ENCODE measurements at regions of chr16 and their contacts with region 1.

Region 1: DNA sequence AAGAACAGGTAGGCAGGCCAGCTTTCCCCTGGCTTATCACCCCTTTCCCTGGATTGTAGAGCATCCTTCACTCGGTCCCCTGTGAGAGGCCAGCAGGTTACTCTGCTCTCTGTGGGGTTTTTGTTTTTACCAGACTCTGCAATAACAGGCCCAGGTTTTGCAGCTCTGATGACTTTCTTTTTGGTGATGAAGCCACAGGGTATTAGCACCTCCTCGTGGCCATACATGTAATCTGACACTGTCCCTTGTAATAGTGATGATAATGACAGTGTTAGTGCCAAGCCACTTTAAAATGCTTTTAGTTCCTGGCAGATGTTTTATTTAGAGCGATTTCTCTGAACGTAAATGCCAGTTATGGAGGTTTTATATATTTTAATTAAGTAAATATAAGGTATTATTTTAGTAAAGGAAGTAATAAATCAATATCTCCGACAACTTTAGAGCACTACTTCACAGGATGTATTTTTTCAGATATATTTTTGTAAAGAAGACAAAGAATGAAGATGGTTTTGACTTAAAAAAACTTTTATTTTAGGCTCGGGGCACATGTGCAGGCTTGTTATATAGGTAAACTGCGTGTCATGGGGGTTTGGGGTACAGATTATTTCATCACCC is 38.0 kb upstream of the CPHXL start:
- DNase-seq: peak; percentile 70
- ATAC-seq: peak; percentile 98
- H3K4me3 ChIP-seq: no peak overlapping the region
- H3K27ac ChIP-seq: no peak overlapping the region
- H3K4me1 ChIP-seq: no peaks in the 10 kb centered on the region
- H3K27me3 ChIP-seq: peaks cover 3% of the 10 kb centered on the region; the same call in 1 of the 2 replicates
- CTCF ChIP-seq: peak; percentile 84
- POLR2A ChIP-seq: 0 out of 2 replicates have a peak, but pooled peaks have one; percentile 35
- RAD21 ChIP-seq: peak; percentile 93

Region 2: DNA sequence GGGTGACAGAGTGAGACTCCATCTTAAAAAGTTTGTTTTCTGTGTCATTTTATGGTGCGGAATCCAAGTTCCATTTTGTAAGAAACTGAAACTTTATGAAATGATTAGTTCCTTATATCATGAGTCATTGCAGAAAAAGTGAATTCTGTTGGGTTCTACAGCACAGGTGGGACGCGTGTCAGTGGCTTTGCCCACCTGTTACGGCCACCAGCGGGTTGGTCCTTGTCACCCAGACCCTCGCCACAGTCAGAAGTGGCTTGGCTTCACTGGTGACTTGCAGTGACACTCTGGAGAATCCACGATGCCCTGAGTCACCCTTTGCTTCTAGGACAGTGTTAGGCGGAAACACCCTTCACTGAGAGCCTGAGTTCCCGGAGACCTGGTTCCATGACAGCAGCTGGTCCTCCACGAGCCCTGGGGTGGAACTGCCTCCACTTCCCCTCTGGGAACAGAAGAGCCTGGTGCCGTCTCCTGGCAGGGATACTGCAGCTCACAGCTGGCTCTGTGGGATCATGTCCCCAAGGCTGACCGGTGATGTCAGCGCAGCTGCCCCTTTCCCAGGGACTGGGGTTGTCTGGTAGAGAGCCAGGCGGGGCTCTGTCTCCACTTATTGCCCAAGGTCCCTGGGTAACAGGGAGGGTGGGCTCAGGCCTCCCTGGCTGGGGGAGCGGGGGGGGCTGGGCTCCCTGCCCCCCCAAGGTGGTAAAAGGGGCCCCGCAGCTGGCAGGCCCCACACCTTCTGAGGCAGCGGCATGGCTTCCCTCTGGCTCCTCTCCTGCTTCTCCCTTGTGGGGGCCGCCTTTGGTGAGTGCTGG is 545.8 kb before region 1 on chr16 and contains the start of gene CTRB1:
- CTCF ChIA-PET with region 1: no interaction called
- POLR2A ChIA-PET with region 1: no interaction called
- dilution Hi-C with region 1: no loop called
- in situ Hi-C with region 1: loop called (anchors 25 kb)
- intact Hi-C with region 1: no loop called
- DNase-seq: no peak
- ATAC-seq: no peak
- H3K4me3 ChIP-seq: no peak within 1 kb of the TSS
- H3K27ac ChIP-seq: no peak within 1 kb of the TSS
- H3K4me1 ChIP-seq: no peaks in the 10 kb centered on the region
- H3K27me3 ChIP-seq: no peaks in the 10 kb centered on the region
- CTCF ChIP-seq: no peak
- POLR2A ChIP-seq: no peak
- RAD21 ChIP-seq: no peak
- total RNA-seq, gene CTRB1: not detected in 2 replicates

Region 3: GRCh38 chr16:75519881-75520280 is 244.4 kb before region 1 on chr16:
- CTCF ChIA-PET with region 1: no interaction called
- POLR2A ChIA-PET with region 1: no interaction called
- dilution Hi-C with region 1: no loop called
- in situ Hi-C with region 1: no loop called
- intact Hi-C with region 1: loop called (anchors 1 kb)
- DNase-seq: no peak
- ATAC-seq: no peak
- H3K4me3 ChIP-seq: no peak overlapping the region
- H3K27ac ChIP-seq: no peak overlapping the region
- H3K4me1 ChIP-seq: no peaks in the 10 kb centered on the region
- H3K27me3 ChIP-seq: no peaks in the 10 kb centered on the region
- CTCF ChIP-seq: no peak
- POLR2A ChIP-seq: no peak
- RAD21 ChIP-seq: no peak

Region 4: GRCh38 chr16:75622761-75623605 is 141.3 kb before region 1 on chr16 and contains the start of gene ADAT1:
- CTCF ChIA-PET with region 1: interaction called, 4 read pairs
- POLR2A ChIA-PET with region 1: no interaction called
- dilution Hi-C with region 1: no loop called
- in situ Hi-C with region 1: no loop called
- intact Hi-C with region 1: loop called (anchors 1 kb)
- DNase-seq: peak; percentile 98
- ATAC-seq: peak; percentile 95
- H3K4me3 ChIP-seq: peak within 1 kb of the TSS; percentile 74
- H3K27ac ChIP-seq: peak within 1 kb of the TSS; percentile 71
- H3K4me1 ChIP-seq: peaks cover 5% of the 10 kb centered on the region
- H3K27me3 ChIP-seq: no peaks in the 10 kb centered on the region
- CTCF ChIP-seq: no peak
- POLR2A ChIP-seq: peak; percentile 77; the same call in 1 of the 2 replicates
- RAD21 ChIP-seq: no peak
- total RNA-seq, gene ADAT1: 36.7 and 52.9 TPM in 2 replicates

Region 5: DNA sequence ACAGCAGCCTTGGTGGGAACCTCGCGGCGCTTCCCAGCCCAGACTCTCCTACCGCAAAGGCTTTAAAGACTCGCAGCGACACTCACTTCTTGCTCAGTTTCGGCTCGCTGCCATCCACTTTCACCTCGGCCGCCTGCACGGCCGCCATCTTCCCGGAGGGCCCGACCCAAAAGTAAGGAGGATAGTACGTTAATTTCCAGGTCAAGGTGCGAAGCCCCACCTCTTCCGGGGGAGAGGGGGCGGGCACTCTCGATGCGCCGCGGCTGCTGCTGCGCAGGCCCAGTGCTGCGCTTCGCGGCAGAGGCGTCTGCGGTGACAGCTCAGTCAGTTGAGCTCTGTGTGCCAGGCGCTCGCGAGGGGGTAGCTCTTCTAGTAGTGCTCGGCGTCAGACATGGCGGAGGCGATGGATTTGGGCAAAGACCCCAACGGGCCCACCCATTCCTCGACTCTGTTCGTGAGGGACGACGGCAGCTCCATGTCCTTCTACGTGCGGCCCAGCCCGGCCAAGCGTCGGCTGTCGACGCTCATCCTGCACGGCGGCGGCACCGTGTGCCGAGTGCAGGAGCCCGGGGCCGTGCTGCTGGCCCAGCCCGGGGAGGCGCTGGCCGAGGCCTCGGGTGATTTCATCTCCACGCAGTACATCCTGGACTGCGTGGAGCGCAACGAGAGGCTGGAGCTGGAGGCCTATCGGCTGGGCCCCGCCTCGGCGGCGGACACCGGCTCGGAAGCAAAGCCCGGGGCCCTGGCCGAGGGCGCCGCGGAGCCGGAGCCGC is 116.6 kb before region 1 on chr16 and contains the starts of genes KARS1 and TERF2IP:
- CTCF ChIA-PET with region 1: interaction called, 6 read pairs
- POLR2A ChIA-PET with region 1: no interaction called
- dilution Hi-C with region 1: no loop called
- in situ Hi-C with region 1: loop called (anchors 10 kb)
- intact Hi-C with region 1: loop called (anchors 1 kb)
- DNase-seq: peak; percentile 91
- ATAC-seq: peak; percentile 92
- H3K4me3 ChIP-seq: peak within 1 kb of the TSS; percentile 85
- H3K27ac ChIP-seq: peak within 1 kb of the TSS; percentile 96
- H3K4me1 ChIP-seq: peaks cover 5% of the 10 kb centered on the region; the same call in 1 of the 2 replicates
- H3K27me3 ChIP-seq: no peaks in the 10 kb centered on the region
- CTCF ChIP-seq: no peak
- POLR2A ChIP-seq: peak; percentile 95
- RAD21 ChIP-seq: no peak
- total RNA-seq, gene KARS1: 228 and 229 TPM in 2 replicates
- total RNA-seq, gene TERF2IP: 15.4 and 25.6 TPM in 2 replicates